H1 (cell line): ENCODE measurements at regions of chr2 and their contacts with region 1.

Region 1: GRCh38 chr2:44770221-44771195 is 171.0 kb upstream of the SIX3 start:
- DNase-seq: peak in 1 of 2 experiments; percentile 38
- H3K4me3 ChIP-seq: no peak overlapping the region
- H3K27ac ChIP-seq: no peak overlapping the region
- H3K4me1 ChIP-seq: peaks cover 5 to 29% (median 21%) of the 10 kb centered on the region in 4 experiments; a peak in 6 of 7 replicates
- H3K27me3 ChIP-seq: peaks cover 0 to 17% (median 14%) of the 10 kb centered on the region in 4 experiments; a peak in 3 of 7 replicates
- CTCF ChIP-seq: peak; percentile 27 to 39 (median 31); a peak in 3 of 4 replicates
- EP300 ChIP-seq: no peak
- POLR2A ChIP-seq: no peak
- RAD21 ChIP-seq: peak; percentile 46 to 59; a peak in 3 of 4 replicates

Region 2: DNA sequence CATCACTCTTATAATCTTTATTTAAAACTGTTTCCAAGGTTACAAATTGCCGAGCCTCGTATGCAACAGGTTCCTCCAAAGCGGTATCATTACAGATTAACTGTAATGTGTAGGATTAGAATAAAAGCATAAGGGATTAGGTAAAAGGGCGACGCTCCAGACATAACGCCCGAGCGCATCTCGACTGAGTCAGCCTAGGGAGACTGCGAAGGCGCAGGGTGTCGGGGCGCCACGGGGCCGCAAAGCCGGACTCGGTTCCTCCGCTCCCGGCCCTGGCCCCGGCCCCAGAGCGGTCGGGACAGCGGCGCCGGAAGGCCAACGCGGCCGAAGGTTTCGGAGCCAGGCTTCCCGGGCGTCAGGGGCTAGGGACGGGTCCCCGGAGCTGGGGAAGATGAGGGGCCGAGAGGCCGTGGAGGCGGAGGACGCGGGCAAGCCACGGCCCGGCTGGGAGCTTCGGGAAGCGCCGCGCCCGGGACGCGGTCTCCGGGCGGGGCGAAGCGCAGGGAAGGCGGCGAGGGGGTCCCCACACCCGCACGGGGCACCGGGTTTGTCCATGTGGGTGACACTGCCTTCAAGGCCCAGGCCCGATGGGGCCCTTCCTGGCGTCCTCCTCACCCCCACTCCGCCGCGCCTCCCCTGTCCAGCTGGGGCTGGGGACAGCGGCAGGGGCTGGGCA is 158.1 kb after region 1 on chr2:
- CTCF ChIA-PET with region 1: interaction called, 13 read pairs
- POLR2A ChIA-PET with region 1: no interaction called
- DNase-seq: no peak
- H3K4me3 ChIP-seq: peak overlapping the region; percentile 26 to 53 (median 34); a peak in 7 of 8 replicates
- H3K27ac ChIP-seq: no peak overlapping the region
- H3K4me1 ChIP-seq: peaks cover 15 to 37% (median 23%) of the 10 kb centered on the region in 4 experiments
- H3K27me3 ChIP-seq: peaks cover 63 to 98% (median 87%) of the 10 kb centered on the region in 4 experiments
- CTCF ChIP-seq: no peak
- EP300 ChIP-seq: no peak
- POLR2A ChIP-seq: no peak
- RAD21 ChIP-seq: no peak

Region 3: DNA sequence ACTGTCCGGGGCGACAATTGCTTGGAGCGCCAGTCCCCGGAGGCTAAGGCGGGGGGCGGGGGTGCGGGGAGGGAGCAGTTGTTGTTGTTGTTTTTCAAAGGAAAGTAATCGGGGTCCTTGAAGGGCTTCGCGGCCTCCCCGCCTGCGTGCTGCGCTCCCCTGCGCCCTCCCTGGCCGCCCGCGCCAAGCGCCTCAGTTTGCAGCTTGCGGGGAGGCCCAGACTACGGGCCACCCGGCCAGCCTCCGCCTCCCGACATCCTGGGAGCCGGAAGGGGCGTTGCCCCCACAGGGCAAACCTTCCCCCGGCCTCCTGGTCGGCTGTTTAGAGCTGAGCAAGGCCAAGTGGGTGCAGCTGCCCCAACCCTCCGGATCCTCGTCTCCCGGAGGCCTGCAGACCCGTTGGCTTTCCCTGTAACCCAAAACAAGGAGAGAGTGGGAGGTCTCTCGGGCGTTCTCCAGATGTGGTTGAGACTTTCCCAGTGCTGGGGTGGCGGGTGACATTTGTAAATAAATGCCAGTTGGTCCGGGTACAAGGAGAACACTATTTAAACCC is 167.3 kb after region 1 on chr2:
- CTCF ChIA-PET with region 1: interaction called, 14 read pairs
- POLR2A ChIA-PET with region 1: interaction called, 4 read pairs
- DNase-seq: peak in 1 of 2 experiments; percentile 82
- H3K4me3 ChIP-seq: peak overlapping the region; percentile 41 to 63 (median 51)
- H3K27ac ChIP-seq: no peak overlapping the region
- H3K4me1 ChIP-seq: peaks cover 0 to 74% (median 50%) of the 10 kb centered on the region in 4 experiments; a peak in 6 of 7 replicates
- H3K27me3 ChIP-seq: peaks cover 76 to 99% (median 96%) of the 10 kb centered on the region in 4 experiments; a peak in 6 of 7 replicates
- CTCF ChIP-seq: peak in 2 of 3 experiments; percentile 6 to 10; a peak in 1 of 4 replicates
- EP300 ChIP-seq: no peak
- POLR2A ChIP-seq: no peak
- RAD21 ChIP-seq: peak in 1 of 2 experiments; percentile 32; a peak in 2 of 4 replicates